Caco-2 (cell line): ENCODE measurements at regions of chr11 and their contacts with region 1.

Region 1: GRCh38 chr11:103257360-103257759 is 148.1 kb downstream of the DYNC2H1 start:
- DNase-seq: peak in 1 of 2 experiments; percentile 58
- H3K4me3 ChIP-seq: no peak overlapping the region
- H3K4me3 Mint-ChIP-seq: no peak overlapping the region
- H3K27ac Mint-ChIP-seq: no peak overlapping the region
- H3K4me1 ChIP-seq: no peaks in the 10 kb centered on the region
- H3K4me1 Mint-ChIP-seq: no peaks in the 10 kb centered on the region
- H3K27me3 ChIP-seq: no peaks in the 10 kb centered on the region
- H3K27me3 Mint-ChIP-seq: no peaks in the 10 kb centered on the region
- CTCF ChIP-seq: peak; percentile 76 to 77

Region 2: GRCh38 chr11:103326070-103326794 is 68.9 kb after region 1 on chr11:
- CTCF ChIA-PET with region 1: no interaction called
- POLR2A ChIA-PET with region 1: no interaction called
- intact Hi-C with region 1: loop called (anchors 5 kb)
- DNase-seq: peak; percentile 50 to 76
- H3K4me3 ChIP-seq: no peak overlapping the region
- H3K4me3 Mint-ChIP-seq: no peak overlapping the region
- H3K27ac Mint-ChIP-seq: no peak overlapping the region
- H3K4me1 ChIP-seq: peaks cover 6% of the 10 kb centered on the region; the same call in 1 of the 2 replicates
- H3K4me1 Mint-ChIP-seq: peaks cover 12% of the 10 kb centered on the region
- H3K27me3 ChIP-seq: no peaks in the 10 kb centered on the region
- H3K27me3 Mint-ChIP-seq: no peaks in the 10 kb centered on the region
- CTCF ChIP-seq: peak; percentile 83 to 86

Region 3: GRCh38 chr11:103609117-103610066 is 352.0 kb after region 1 on chr11:
- CTCF ChIA-PET with region 1: no interaction called
- POLR2A ChIA-PET with region 1: no interaction called
- intact Hi-C with region 1: loop called (anchors 2 kb)
- DNase-seq: peak; percentile 50 to 61
- H3K4me3 ChIP-seq: no peak overlapping the region
- H3K4me3 Mint-ChIP-seq: no peak overlapping the region
- H3K27ac Mint-ChIP-seq: peak overlapping the region; percentile 34
- H3K4me1 ChIP-seq: no peaks in the 10 kb centered on the region
- H3K4me1 Mint-ChIP-seq: peaks cover 7% of the 10 kb centered on the region
- H3K27me3 ChIP-seq: no peaks in the 10 kb centered on the region
- H3K27me3 Mint-ChIP-seq: peaks cover 4% of the 10 kb centered on the region
- CTCF ChIP-seq: peak; percentile 68 to 70